Activated CD8-positive, alpha-beta memory T cell treated with anti-CD3 and anti-CD28 coated beads, Interleukin-2, amount 10 ng/mL, durations not matched to agents 7 days and 5 days (primary cell): ENCODE measurements at regions of chr4 and their contacts with region 1.

Region 1: DNA sequence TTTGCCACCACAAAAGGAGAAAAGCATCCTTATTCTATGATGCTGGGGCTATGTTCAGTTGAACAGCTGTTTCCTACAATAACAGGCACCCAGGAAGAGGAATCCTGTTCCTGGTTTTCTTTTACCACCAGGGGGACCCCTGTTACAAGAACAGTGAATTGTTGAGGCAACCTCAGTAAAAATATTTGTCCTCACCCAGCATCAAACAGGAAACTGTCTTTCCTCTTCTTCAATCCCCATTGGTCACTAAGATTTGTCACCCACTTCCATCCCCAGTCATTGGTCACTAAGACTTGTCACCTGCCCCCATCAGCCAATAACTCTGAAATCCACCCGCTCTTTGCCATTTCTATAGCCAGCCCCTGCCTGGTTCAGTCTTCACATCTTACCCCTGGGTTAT is 143.5 kb upstream of the GALNT7 start:
- DNase-seq: no peak
- ATAC-seq: peak; percentile 68
- H3K4me3 Mint-ChIP-seq: no peak overlapping the region
- H3K27ac Mint-ChIP-seq: no peak overlapping the region
- H3K4me1 Mint-ChIP-seq: peaks cover 2% of the 10 kb centered on the region
- H3K27me3 Mint-ChIP-seq: peaks cover 10% of the 10 kb centered on the region

Region 2: DNA sequence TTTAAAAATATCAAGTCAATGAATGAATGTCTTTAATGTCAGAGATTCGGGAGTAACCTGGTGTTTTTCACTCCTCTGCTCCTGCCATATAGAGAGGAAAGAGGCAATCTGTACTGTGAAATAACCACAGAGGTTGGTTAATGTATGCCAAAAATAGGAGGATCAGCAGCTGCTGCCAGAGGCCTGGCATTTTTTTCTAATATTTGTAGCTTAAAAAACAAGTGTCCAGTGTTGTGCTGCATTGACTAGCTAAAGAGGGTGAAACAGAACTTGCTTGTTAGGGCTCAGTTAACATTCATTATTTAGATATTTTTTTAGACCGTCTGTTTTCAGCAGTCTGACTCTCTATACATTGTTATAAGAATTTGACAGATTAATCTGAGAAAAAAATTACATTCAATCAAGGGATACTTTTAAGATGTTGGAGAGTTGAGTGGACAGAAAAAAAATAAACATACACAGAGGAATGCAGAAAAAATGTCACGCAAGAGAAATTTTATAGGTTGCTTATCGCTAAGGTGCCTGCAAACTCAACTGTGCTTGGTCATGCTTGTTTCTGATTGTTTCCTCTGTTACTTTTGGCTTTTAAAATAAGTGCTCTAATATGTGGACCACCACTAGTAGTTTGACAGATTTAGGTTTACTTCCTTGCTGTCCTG is 248.8 kb before region 1 on chr4:
- CTCF ChIA-PET with region 1: no interaction called
- DNase-seq: no peak
- ATAC-seq: no peak
- H3K4me3 Mint-ChIP-seq: no peak overlapping the region
- H3K27ac Mint-ChIP-seq: no peak overlapping the region
- H3K4me1 Mint-ChIP-seq: no peaks in the 10 kb centered on the region
- H3K27me3 Mint-ChIP-seq: no peaks in the 10 kb centered on the region

Region 3: DNA sequence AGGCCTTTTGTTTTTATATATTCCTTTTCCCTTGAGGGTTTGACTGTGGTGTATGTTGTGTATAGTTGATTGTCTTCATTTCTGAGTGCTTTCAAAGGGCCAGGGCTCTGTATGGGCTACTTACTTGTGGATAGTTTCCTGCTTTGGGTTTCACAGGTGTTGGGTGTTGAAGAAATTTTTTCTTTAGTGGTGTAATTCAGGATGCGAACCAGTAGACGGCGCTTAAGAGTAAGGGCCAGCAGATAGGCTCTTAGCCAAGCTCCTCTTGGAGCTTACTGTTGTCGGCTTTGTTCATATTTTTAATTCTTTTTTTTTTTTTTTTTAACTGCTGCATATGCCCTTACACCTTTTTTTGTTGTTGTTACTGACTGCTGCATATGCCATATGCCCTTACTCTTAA is 132.8 kb before region 1 on chr4:
- CTCF ChIA-PET with region 1: no interaction called
- DNase-seq: no peak
- ATAC-seq: no peak
- H3K4me3 Mint-ChIP-seq: no peak overlapping the region
- H3K27ac Mint-ChIP-seq: no peak overlapping the region
- H3K4me1 Mint-ChIP-seq: no peaks in the 10 kb centered on the region
- H3K27me3 Mint-ChIP-seq: no peaks in the 10 kb centered on the region

Region 4: DNA sequence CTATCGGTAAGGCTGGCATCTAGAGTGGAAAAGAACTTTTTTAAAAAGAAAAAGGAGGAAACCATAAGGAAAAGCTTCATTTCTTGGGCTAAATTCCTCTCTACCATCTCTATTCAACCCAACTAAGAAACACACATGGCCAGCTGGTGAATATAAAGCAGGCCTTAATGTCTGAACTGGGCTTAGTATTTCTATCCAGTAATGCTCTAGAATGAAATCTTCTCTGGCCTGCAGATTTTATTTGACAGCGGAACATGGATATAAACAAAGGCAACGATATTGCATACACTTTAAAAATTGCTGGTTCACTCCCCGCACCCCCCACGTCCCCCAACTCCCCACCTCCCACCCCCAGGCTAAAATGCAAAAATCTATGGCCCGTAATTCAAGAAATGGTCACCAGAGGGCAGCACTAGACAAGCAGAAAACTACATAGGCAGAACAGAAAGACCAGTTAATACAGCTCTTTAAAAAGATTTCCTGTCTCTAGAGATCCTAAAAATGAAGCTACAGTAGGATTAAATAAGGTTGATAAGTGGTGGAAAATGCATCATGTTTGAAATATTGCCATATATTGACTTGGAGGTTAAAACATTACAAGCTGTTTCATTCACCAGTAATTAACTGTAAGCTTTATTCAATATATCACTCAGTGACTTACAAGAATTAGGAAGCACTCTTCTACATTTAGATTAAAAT is 11.8 kb before region 1 on chr4:
- CTCF ChIA-PET with region 1: interaction called, 13 read pairs
- DNase-seq: peak; percentile 54
- ATAC-seq: no peak
- H3K4me3 Mint-ChIP-seq: no peak overlapping the region
- H3K27ac Mint-ChIP-seq: no peak overlapping the region
- H3K4me1 Mint-ChIP-seq: no peaks in the 10 kb centered on the region
- H3K27me3 Mint-ChIP-seq: peaks cover 7% of the 10 kb centered on the region

Region 5: DNA sequence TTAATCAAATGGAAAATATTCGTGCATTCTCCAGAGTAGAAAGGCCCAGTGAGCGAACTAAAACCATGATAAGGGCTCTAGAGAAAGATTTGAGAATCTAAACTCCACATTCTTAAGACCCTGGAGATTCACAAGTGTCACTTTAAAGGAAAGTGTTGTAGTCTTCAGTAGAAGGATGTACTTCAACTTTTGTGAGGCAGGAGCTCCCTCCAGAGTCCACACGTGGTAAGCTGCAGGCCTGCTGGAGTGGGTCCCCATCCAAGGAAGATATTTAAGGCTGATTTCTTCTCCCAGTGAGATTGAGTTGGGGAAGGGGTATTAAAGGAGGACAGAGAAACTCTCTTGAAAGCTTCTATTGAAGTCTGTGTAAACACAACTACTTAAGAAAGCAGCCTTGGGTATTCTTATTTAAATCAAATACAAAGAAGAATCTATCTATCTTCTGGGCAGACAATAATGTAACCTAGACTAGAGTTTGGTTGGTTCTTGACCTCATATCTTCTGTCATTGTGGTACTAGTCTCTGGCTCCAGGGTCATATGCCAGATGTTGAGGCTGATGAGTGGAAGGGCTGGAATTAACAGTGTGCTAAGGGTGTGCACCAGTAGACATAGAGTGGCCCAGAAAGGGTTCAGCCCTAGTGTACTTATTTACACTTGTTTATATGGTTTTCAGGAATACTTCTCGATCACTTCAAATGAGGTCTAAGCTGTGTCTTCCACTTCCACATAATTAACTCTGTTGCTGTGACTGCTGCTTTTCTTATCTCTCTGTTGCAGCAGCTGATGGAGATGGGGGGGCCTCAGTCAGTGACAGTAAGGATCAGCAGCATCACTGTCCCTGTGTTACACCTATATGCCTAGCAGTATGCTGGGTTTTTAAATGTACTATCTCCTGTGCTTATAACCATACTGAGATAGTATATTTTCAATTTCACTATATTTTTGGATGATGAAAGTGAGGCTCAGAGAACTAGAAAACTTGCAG is 232.9 kb after region 1 on chr4:
- CTCF ChIA-PET with region 1: interaction called, 16 read pairs
- DNase-seq: peak; percentile 69
- ATAC-seq: peak; percentile 85
- H3K4me3 Mint-ChIP-seq: no peak overlapping the region
- H3K27ac Mint-ChIP-seq: no peak overlapping the region
- H3K4me1 Mint-ChIP-seq: no peaks in the 10 kb centered on the region
- H3K27me3 Mint-ChIP-seq: no peaks in the 10 kb centered on the region

Region 6: DNA sequence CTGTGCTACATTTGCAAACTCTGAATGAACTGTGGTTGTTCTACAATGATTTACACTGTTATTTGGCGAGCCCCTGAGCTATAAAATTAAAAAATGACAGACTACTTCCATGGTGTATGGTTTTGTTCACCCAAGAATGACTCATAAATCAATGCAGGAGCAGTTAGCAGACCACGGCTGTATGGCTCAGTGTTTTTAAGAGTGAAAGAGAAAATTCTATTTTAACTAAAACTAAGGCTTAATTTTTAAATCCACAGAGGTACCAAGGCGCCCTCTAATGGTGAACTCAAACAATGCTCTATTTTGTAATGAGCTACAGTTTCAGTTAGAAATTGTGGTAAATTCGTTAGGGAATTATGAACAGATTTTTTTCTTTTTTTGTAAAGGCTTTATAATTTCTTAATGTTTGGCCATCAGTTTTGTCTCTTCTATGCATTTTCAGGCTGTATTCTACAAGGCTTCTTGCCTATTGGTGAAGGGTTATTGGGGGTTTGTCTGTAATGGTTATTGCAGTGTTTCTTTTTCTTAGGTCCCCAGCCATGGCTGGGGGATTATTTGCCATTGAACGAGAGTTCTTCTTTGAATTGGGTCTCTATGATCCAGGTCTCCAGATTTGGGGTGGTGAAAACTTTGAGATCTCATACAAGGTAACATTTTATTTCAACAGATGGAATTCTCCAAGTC is 276.5 kb after region 1 on chr4:
- CTCF ChIA-PET with region 1: interaction called, 20 read pairs
- DNase-seq: no peak
- ATAC-seq: peak; percentile 36
- H3K4me3 Mint-ChIP-seq: no peak overlapping the region
- H3K27ac Mint-ChIP-seq: no peak overlapping the region
- H3K4me1 Mint-ChIP-seq: peaks cover 3% of the 10 kb centered on the region
- H3K27me3 Mint-ChIP-seq: no peaks in the 10 kb centered on the region